Common myeloid progenitor, CD34-positive (primary cell): ENCODE measurements at regions of chr7 and their contacts with region 1.

Region 1: DNA sequence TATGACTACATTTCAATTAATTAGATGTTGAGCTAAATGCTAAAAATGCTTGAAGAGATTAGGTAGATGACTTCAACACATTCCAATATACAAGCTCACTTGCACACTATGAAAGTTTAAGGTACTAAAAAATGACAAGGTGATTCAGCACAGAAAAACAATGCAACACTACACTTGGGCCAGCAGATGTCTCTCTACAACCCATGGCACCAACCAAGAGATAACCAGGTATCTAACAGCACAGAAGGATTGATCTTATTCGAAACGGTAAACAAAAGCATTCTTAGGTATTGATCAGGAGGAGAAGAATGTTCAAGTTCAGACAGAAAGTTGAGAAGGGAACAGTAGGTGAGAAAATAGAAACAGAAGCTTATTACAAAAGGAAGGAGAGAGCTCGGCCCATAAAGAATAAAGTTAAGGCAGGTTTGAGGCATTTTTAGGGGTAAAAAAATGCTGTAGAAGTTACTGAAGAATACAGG is 248.2 kb upstream of the KLF14 start:
- DNase-seq: peak; percentile 67 to 73 (median 72)
- H3K4me3 ChIP-seq: peak overlapping the region in 1 of 7 experiments; percentile 42
- H3K27ac ChIP-seq: peak overlapping the region; percentile 30 to 56
- H3K4me1 ChIP-seq: peaks cover 18 to 43% (median 30%) of the 10 kb centered on the region in 4 experiments
- H3K27me3 ChIP-seq: no peaks in the 10 kb centered on the region

Region 2: GRCh38 chr7:130662426-130662825 is 319.8 kb before region 1 on chr7:
- CTCF ChIA-PET with region 1: no interaction called
- POLR2A ChIA-PET with region 1: no interaction called
- DNase-seq: no peak
- H3K4me3 ChIP-seq: no peak overlapping the region
- H3K27ac ChIP-seq: no peak overlapping the region
- H3K4me1 ChIP-seq: peaks cover 0 to under 1% (median 0%) of the 10 kb centered on the region in 4 experiments
- H3K27me3 ChIP-seq: no peaks in the 10 kb centered on the region

Region 3: DNA sequence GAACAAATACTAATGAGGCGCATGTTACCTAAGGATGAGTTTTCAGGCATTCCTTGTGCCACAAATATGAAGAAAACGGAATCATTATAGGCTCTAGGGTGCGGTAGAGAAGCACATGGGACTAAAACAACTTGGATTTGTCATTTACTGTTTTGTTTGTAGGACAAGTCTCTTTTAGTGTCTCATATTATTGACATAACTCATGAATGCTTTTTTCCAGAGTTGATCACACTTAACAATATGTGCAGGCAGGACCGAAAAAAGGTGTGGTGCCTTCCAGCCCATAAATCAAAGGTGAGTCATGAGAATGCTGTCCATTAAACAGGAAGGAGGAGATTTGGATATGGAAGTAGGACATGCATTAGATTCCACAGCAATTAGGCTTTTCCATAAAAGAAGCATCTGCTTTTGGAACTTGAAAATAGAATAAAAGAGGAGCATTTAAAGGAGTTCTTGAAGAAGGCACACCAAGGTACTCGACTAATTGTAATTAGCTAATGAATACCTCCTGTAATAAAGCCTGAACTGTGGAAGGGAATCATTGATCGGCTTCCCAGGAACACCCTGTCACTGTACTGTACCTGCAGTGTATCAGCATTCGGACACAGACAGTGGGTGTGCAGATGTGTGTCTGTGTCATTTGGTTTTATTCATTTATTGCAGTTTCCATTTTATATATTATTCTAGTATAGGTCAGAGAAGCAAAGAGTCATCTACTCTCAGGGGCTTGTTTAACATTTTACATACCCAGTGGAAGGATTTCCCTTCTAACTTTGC is 128.5 kb before region 1 on chr7:
- CTCF ChIA-PET with region 1: no interaction called
- POLR2A ChIA-PET with region 1: no interaction called
- DNase-seq: no peak
- H3K4me3 ChIP-seq: no peak overlapping the region
- H3K27ac ChIP-seq: no peak overlapping the region
- H3K4me1 ChIP-seq: no peaks in the 10 kb centered on the region
- H3K27me3 ChIP-seq: no peaks in the 10 kb centered on the region

Region 4: GRCh38 chr7:130912862-130913631 is 69.2 kb before region 1 on chr7:
- CTCF ChIA-PET with region 1: interaction called, 16 read pairs
- POLR2A ChIA-PET with region 1: interaction called, 3 read pairs
- DNase-seq: peak; percentile 89 to 98 (median 98)
- H3K4me3 ChIP-seq: peak overlapping the region; percentile 32 to 98 (median 76)
- H3K27ac ChIP-seq: peak overlapping the region; percentile 91 to 92
- H3K4me1 ChIP-seq: peaks cover 27 to 82% (median 51%) of the 10 kb centered on the region in 4 experiments
- H3K27me3 ChIP-seq: no peaks in the 10 kb centered on the region

Region 5: GRCh38 chr7:130966246-130967009 is 15.8 kb before region 1 on chr7:
- CTCF ChIA-PET with region 1: interaction called, 36 read pairs
- POLR2A ChIA-PET with region 1: no interaction called
- DNase-seq: no peak
- H3K4me3 ChIP-seq: no peak overlapping the region
- H3K27ac ChIP-seq: no peak overlapping the region
- H3K4me1 ChIP-seq: peaks cover 12 to 38% (median 27%) of the 10 kb centered on the region in 4 experiments
- H3K27me3 ChIP-seq: no peaks in the 10 kb centered on the region

Region 6: DNA sequence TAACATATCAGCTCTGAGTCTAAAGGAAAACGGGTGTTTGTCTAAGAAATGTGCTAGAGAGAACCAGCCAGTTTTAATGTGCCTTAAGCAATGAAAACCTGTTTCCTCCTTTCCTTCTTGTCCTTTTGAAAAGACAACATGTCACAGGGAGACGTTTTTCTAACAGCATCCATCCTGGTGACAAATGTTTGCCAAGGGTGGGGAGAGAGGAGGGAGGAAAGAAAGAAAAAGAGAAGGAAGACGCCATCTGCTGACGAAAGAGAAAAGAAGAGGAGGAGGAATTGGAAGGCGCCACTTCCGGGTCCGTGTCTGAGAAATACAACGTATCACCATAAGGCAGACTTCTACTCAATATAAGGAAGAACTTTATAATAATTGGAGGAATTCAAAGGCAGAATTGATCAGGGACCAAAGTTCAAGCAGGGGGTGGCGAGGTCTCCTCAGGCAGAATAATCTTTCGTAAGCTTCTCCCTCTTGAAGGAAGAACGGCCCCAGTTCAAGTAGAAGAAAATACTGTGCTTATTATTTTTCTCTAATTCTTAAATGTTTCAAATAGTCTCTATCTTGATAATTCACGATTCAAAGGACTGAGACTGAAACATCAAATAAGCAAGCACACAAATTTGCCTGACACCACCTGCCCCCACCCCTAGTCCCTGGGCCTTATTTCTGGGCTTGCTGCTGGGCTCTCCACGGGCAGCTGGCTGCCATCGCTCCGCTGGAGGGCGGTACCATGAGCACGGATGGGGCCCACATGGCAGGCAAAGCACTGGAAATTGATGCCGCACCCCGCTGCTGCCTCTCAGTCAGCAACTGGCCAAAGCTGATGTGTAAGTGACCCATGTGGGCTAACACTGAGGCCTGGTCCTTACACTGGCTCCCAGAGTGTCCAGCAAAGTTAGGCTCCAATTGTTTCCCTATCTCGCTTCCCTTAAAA is 25.5 kb after region 1 on chr7:
- CTCF ChIA-PET with region 1: interaction called, 30 read pairs
- POLR2A ChIA-PET with region 1: interaction called, 4 read pairs
- DNase-seq: peak; percentile 82 to 89 (median 85)
- H3K4me3 ChIP-seq: peak overlapping the region in 4 of 7 experiments; percentile 11 to 37 (median 24)
- H3K27ac ChIP-seq: peak overlapping the region; percentile 37 to 82
- H3K4me1 ChIP-seq: peaks cover 18 to 70% (median 57%) of the 10 kb centered on the region in 4 experiments
- H3K27me3 ChIP-seq: no peaks in the 10 kb centered on the region